Activated B cell treated with CpG ODN at 0.5 μM for 24 hours (primary cell): ENCODE measurements at regions of chr19 and their contacts with region 1.

Region 1: DNA sequence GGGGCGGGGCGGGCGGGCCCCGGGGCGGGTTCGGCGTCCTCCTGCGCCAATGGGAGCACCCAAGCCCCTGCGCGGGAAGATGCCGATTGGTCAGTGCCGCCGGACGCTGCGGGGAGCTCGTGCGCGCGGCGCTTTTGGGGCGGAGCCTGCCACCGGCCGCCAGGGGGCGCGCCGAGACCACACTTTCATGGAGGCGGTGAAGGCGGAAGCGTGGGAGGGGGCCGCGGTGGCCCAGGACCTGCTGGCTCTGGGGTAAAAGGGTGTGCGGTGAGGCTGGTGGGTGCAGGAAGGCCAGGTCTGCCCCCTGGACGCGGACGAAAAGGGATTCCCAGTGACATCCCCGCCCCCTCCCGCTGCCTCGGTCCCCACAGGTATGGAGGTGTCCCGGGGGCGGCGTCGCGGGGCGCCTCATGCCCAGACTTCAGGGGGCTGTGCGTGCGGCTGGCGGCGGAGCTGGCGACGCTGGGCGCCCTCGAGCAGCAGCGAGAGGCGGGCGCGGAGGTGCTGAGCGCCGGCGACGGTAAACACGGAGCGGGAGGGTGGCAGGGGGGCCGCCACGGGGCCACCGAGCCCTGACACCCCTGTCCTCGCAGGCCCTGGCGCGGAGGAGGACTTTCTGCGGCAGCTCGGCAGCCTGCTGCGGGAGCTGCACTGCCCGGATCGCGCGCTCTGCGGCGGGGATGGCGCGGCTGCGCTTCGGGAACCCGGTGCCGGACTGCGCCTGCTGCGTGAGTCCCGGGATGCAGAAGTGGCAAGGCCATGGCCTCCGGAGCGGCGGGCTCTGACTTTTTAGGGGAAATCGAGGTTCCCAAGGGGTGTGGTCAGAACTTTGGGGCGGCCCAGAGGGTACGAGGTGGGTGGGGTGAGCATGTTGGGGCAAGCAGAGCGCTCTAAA is at the start of gene FAM98C:
- DNase-seq: peak; percentile 99
- ATAC-seq: peak; percentile 97
- H3K4me3 Mint-ChIP-seq: peak within 1 kb of the TSS; percentile 91
- H3K27ac Mint-ChIP-seq: peak within 1 kb of the TSS; percentile 90
- H3K4me1 Mint-ChIP-seq: peaks cover 22% of the 10 kb centered on the region
- H3K27me3 Mint-ChIP-seq: peaks cover 6% of the 10 kb centered on the region
- CTCF ChIP-seq: peak; percentile 98
- total RNA-seq, gene FAM98C: 38.3 and 40.0 TPM in 2 replicates

Region 2: GRCh38 chr19:38346837-38347236 is 56.4 kb before region 1 on chr19:
- CTCF ChIA-PET with region 1: no interaction called
- POLR2A ChIA-PET with region 1: no interaction called
- intact Hi-C with region 1: no loop called
- DNase-seq: no peak
- ATAC-seq: no peak
- H3K4me3 Mint-ChIP-seq: no peak overlapping the region
- H3K27ac Mint-ChIP-seq: no peak overlapping the region
- H3K4me1 Mint-ChIP-seq: no peaks in the 10 kb centered on the region
- H3K27me3 Mint-ChIP-seq: no peaks in the 10 kb centered on the region
- CTCF ChIP-seq: no peak

Region 3: DNA sequence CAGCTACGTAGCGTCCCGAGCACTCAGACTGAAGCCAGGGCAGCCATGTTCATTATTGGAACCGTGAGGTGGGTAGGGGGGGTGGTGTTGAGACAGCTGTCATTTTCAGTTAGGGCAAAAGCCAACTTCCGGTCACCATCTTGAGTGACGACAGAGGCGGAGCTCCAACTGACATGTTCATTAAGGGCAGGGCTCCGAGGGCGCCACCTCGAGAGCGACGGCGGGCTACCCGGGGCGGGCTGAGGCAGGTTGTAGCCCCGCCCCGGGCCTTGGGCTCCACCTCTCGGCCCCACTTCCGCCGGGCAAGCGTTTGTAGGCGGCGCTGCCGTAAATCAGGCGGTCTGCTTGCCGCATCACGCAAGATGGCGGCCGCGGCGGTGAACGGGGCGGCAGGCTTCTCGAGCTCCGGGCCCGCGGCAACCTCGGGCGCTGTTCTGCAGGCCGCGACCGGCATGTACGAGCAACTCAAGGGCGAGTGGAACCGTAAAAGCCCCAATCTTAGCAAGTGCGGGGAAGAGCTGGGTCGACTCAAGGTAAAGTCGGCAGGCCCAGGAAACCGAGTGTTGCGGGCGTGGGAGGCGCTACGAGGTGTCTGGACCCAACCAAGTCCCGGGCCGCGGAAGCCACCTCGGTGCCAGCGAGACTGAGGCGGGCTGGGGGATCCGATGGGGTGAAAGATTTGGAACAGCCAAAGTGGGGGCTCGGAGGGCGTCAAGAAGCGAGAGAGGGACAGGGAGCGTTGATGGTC is 28.6 kb before region 1 on chr19 and contains the start of gene PSMD8:
- CTCF ChIA-PET with region 1: interaction called, 14 read pairs
- POLR2A ChIA-PET with region 1: interaction called, 30 read pairs
- intact Hi-C with region 1: loop called (anchors 1 kb)
- DNase-seq: peak; percentile 96
- ATAC-seq: peak; percentile 96
- H3K4me3 Mint-ChIP-seq: peak within 1 kb of the TSS; percentile 100
- H3K27ac Mint-ChIP-seq: peak within 1 kb of the TSS; percentile 96
- H3K4me1 Mint-ChIP-seq: peaks cover 25% of the 10 kb centered on the region
- H3K27me3 Mint-ChIP-seq: no peaks in the 10 kb centered on the region
- CTCF ChIP-seq: no peak
- total RNA-seq, gene PSMD8: 134 and 138 TPM in 2 replicates

Region 4: GRCh38 chr19:38425810-38426466 is 22.7 kb after region 1 on chr19 and contains the start of gene RASGRP4:
- CTCF ChIA-PET with region 1: interaction called, 29 read pairs
- POLR2A ChIA-PET with region 1: interaction called, 31 read pairs
- intact Hi-C with region 1: loop called (anchors 1 kb)
- DNase-seq: peak; percentile 66
- ATAC-seq: peak; percentile 76
- H3K4me3 Mint-ChIP-seq: peak within 1 kb of the TSS; percentile 74
- H3K27ac Mint-ChIP-seq: peak within 1 kb of the TSS; percentile 94
- H3K4me1 Mint-ChIP-seq: peaks cover 39% of the 10 kb centered on the region
- H3K27me3 Mint-ChIP-seq: no peaks in the 10 kb centered on the region
- CTCF ChIP-seq: no peak
- total RNA-seq, gene RASGRP4: 3.2 and 3.6 TPM in 2 replicates

Region 5: DNA sequence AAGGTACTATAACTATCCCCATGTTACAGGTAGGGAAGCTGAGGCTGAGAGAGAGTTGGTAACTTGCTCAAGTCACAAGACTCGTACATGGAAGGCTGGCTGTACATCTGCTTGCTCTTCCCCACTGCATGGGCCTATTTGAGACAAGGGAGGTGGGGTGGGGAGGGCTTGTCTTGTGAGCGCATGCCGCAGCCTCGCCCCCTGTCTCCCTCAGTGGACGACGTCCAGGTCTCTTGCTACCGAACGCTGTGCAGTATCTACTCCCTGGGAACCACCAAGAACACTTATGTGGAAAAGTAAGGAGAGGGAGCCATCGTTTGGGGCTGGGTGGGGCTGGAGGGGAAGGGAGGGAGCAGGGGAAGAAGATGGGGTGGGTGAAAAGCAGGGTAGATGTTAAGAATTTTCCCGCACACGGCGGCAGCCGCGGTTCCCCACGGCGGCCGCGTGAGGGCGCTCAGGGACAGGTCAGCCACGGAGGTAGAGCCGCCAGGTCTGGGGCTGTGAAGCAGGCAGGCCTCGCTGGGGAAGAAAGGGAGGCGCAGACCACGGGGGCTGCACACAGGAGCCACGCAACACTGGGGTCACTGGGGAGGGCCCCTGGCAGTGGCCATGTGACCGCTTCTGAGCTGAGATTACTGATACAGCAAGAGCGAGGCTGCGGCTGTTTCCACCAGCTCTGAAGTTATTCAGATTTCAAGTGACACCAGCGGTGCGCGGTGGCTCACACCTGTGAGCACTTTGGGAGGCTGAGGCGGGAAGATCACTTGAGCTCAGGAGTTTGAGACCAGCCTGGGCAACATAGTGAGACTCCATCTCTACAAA is 111.8 kb after region 1 on chr19:
- CTCF ChIA-PET with region 1: interaction called, 24 read pairs
- POLR2A ChIA-PET with region 1: interaction called, 12 read pairs
- intact Hi-C with region 1: loop called (anchors 1 kb)
- DNase-seq: peak; percentile 70
- ATAC-seq: peak; percentile 97
- H3K4me3 Mint-ChIP-seq: no peak overlapping the region
- H3K27ac Mint-ChIP-seq: no peak overlapping the region
- H3K4me1 Mint-ChIP-seq: peaks cover 5% of the 10 kb centered on the region
- H3K27me3 Mint-ChIP-seq: peaks cover 12% of the 10 kb centered on the region
- CTCF ChIP-seq: no peak

Region 6: DNA sequence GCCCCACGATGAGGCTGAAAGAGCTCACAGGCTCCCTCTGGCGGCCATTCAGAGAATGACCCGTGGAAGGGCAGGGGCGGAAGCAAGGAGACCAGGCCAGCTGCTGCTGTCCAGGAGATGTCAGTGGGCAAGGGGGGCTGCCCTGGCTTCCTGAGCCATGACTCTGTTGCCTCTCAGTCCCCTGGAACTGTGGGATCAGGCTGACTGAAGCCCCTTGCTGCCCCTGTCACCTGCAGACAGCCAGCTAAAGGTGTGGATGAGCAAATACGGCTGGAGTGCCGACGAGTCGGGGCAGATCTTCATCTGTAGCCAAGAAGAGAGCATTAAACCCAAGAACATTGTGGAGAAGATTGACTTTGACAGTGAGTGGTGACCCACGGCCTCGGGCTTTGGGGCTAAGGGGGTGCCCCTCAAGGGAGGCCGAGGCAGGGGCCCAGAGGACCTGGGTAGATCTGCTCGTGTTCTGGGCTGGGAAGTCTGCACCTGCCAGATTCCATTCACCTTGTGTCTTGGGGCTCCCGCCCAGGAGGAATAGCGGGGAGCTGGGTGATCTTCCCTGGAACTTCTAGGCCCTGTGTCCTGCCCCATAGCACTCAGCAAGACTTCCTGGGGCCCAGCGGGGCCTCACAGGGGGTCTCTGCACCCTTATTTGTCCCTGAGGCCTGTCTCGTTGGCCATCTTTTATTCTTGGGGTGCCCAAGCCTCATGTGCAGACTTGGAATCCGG is 231.7 kb after region 1 on chr19:
- CTCF ChIA-PET with region 1: interaction called, 80 read pairs
- POLR2A ChIA-PET with region 1: interaction called, 45 read pairs
- intact Hi-C with region 1: loop called (anchors 1 kb)
- DNase-seq: peak; percentile 73
- ATAC-seq: peak; percentile 51
- H3K4me3 Mint-ChIP-seq: no peak overlapping the region
- H3K27ac Mint-ChIP-seq: peak overlapping the region; percentile 79
- H3K4me1 Mint-ChIP-seq: peaks cover 29% of the 10 kb centered on the region
- H3K27me3 Mint-ChIP-seq: no peaks in the 10 kb centered on the region
- CTCF ChIP-seq: peak; percentile 76

Region 7: GRCh38 chr19:38658462-38659306 is 255.5 kb after region 1 on chr19:
- CTCF ChIA-PET with region 1: no interaction called
- POLR2A ChIA-PET with region 1: no interaction called
- intact Hi-C with region 1: no loop called
- DNase-seq: no peak
- ATAC-seq: no peak
- H3K4me3 Mint-ChIP-seq: no peak overlapping the region
- H3K27ac Mint-ChIP-seq: peak overlapping the region; percentile 47
- H3K4me1 Mint-ChIP-seq: peaks cover 44% of the 10 kb centered on the region
- H3K27me3 Mint-ChIP-seq: no peaks in the 10 kb centered on the region
- CTCF ChIP-seq: no peak

Region 8: GRCh38 chr19:38891771-38892170 is 488.6 kb after region 1 on chr19:
- CTCF ChIA-PET with region 1: interaction called, 22 read pairs
- POLR2A ChIA-PET with region 1: no interaction called
- intact Hi-C with region 1: loop called (anchors 1 kb)
- DNase-seq: no peak
- ATAC-seq: no peak
- H3K4me3 Mint-ChIP-seq: no peak overlapping the region
- H3K27ac Mint-ChIP-seq: no peak overlapping the region
- H3K4me1 Mint-ChIP-seq: peaks cover 1% of the 10 kb centered on the region
- H3K27me3 Mint-ChIP-seq: no peaks in the 10 kb centered on the region
- CTCF ChIP-seq: no peak